Tibial artery (tissue), 4 donors: ENCODE measurements at regions of chr17 and their contacts with region 1.

Region 1: GRCh38 chr17:75515496-75516254 is at the start of gene CASKIN2:
- DNase-seq: peak; percentile 94 to 98
- H3K4me3 ChIP-seq: peak within 1 kb of the TSS; percentile 83 to 97
- H3K27ac ChIP-seq: peak within 1 kb of the TSS; percentile 87 to 93
- H3K4me1 ChIP-seq: peaks cover 0 to 56% (median 53%) of the 10 kb centered on the region in 4 donors
- H3K27me3 ChIP-seq: no peaks in the 10 kb centered on the region
- CTCF ChIP-seq: peak; percentile 95 to 98

Region 2: GRCh38 chr17:75319904-75320691 is 195.6 kb before region 1 on chr17:
- intact Hi-C with region 1: loop called (anchors 5 kb)
- DNase-seq: no peak
- H3K4me3 ChIP-seq: no peak overlapping the region
- H3K27ac ChIP-seq: no peak overlapping the region
- H3K4me1 ChIP-seq: peaks cover 0 to 5% (median 0%) of the 10 kb centered on the region in 4 donors
- H3K27me3 ChIP-seq: no peaks in the 10 kb centered on the region
- CTCF ChIP-seq: no peak

Region 3: DNA sequence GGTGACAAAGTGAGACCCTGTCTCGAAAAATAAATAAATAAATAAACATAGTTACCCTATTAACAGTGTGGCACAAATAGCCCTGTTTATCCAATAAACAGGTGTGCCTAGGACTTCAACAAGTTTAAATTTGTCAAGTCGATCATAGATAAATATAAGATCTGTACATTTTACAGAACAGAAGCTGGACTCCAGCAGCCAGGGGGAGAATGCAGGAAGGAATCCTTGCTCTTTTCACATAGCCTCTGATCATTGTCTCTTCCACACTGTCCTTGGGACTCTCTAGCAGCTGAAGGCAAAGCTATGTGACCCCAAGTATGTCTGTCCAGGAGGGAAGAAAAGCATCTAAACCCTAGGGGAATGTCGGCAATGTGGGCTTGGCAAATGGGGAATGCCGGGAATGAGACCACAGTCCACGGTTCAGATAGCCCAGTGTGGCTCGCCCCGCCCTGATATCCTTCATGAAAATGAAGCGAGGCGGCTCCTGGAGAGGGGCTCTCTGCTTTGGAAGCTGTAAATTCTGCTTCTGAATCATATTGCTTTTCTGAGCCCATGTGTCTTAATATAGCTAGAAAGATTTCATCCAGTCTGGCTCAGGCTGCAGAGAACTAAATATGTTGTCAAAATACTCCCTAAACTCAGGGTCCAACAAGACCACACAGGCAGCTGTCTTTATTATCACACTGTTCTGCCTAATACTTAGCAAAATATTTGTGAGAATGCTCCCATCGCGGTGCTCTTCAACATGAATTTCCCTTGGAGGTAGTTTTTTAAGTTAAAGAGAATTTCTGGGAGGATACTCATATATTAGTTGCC is 85.3 kb before region 1 on chr17:
- intact Hi-C with region 1: loop called (anchors 2 kb)
- DNase-seq: peak in 1 of 2 donors; percentile 65
- H3K4me3 ChIP-seq: no peak overlapping the region
- H3K27ac ChIP-seq: peak overlapping the region; percentile 81 to 85
- H3K4me1 ChIP-seq: peaks cover 0 to 37% (median 20%) of the 10 kb centered on the region in 4 donors
- H3K27me3 ChIP-seq: no peaks in the 10 kb centered on the region
- CTCF ChIP-seq: no peak

Region 4: GRCh38 chr17:76737082-76737675 is 1221.5 kb after region 1 on chr17 and contains the start of gene SRSF2:
- intact Hi-C with region 1: loop called (anchors 10 kb)
- DNase-seq: peak; percentile 97 to 99
- H3K4me3 ChIP-seq: peak within 1 kb of the TSS; percentile 89 to 99
- H3K27ac ChIP-seq: peak within 1 kb of the TSS; percentile 97 to 100
- H3K4me1 ChIP-seq: peaks cover 0 to 64% (median 50%) of the 10 kb centered on the region in 4 donors
- H3K27me3 ChIP-seq: no peaks in the 10 kb centered on the region
- CTCF ChIP-seq: peak in 1 of 2 experiments; percentile 11